Naive thymus-derived CD8-positive, alpha-beta T cell (primary cell): ENCODE measurements at regions of chr1 and their contacts with region 1.

Region 1: GRCh38 chr1:24987875-24988557 is 57.9 kb upstream of the RUNX3 start:
- DNase-seq: peak in 3 of 10 donors; percentile 42 to 64 (median 46)
- ATAC-seq: peak; percentile 50 to 80
- H3K4me3 Mint-ChIP-seq: peak overlapping the region in 9 of 10 donors; percentile 16 to 84 (median 75)
- H3K27ac Mint-ChIP-seq: peak overlapping the region; percentile 83 to 96 (median 90)
- H3K4me1 Mint-ChIP-seq: peaks cover 74 to 100% (median 98%) of the 10 kb centered on the region in 4 donors
- H3K27me3 Mint-ChIP-seq: no peaks in the 10 kb centered on the region

Region 2: DNA sequence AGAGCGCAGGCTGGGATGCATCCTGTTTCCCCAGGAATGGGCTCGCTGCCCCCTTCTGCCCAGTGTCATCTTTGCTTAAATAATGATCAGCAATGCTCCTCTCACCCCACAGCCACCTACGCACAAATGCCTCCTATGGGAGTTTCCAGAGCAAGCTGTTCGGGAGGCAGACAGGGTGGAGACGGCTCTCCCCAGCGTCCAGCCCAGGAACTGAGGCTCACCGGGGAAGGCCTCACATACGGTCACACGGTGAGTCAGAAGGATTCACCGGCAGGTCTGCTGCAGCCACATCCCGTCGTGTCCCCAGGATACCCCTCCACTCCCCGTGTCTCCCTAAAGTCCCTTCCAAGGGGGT is 17.6 kb before region 1 on chr1:
- POLR2A ChIA-PET with region 1: interaction called, 135 read pairs
- DNase-seq: no peak
- ATAC-seq: no peak
- H3K4me3 Mint-ChIP-seq: peak overlapping the region; percentile 44 to 88 (median 72)
- H3K27ac Mint-ChIP-seq: peak overlapping the region; percentile 81 to 97 (median 89)
- H3K4me1 Mint-ChIP-seq: peaks cover 38 to 79% (median 69%) of the 10 kb centered on the region in 4 donors
- H3K27me3 Mint-ChIP-seq: no peaks in the 10 kb centered on the region

Region 3: GRCh38 chr1:25031966-25032667 is 44.1 kb after region 1 on chr1:
- POLR2A ChIA-PET with region 1: interaction called, 14 read pairs
- DNase-seq: peak in 9 of 10 donors; percentile 54 to 86 (median 68)
- ATAC-seq: peak; percentile 58 to 88
- H3K4me3 Mint-ChIP-seq: peak overlapping the region; percentile 54 to 81 (median 69)
- H3K27ac Mint-ChIP-seq: peak overlapping the region in 8 of 10 donors; percentile 95 to 98 (median 96)
- H3K4me1 Mint-ChIP-seq: peaks cover 6 to 73% (median 42%) of the 10 kb centered on the region in 4 donors
- H3K27me3 Mint-ChIP-seq: no peaks in the 10 kb centered on the region

Region 4: DNA sequence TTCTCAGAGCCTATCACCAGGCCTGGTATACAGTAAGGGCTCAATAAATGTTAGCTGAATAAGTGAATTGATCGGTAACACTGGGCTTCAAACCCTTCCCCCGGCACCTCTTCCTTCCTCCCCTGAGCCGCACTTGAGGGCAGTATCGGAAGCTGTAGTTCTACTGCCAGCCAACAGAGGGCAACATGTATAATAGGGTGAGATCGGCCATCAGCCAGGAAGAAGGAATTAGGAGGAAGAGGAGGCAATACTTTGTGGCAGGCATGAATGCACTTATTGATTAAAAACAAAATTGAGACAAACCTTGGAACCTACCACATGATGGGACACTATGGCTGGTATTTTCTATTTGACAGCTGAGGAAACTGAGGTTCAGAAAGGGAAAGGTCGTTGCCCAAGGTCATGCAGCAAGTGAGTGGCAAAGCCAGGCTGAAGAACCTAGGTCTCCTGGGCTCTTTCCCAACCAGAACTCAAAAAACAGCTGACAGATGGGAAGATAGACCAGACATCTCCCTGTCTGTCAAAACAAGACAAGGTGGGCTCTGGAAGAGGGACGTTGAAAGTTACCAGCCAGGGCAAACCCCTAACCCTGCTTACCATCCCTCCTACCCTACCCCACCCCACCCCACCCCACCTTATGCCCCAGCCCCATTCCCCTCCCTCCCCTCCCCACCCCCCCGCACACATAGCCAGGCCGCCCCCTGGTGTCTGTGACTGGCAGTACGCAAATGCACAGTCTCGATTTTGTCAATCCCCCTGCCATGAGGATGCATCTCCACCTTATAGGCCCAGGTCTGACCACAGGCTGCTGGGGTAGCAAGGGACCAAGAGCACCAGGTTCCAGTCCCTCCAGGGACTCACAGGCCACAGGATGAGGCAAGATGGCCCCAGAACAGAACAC is 49.4 kb after region 1 on chr1:
- POLR2A ChIA-PET with region 1: interaction called, 14 read pairs
- DNase-seq: peak; percentile 37 to 81 (median 56)
- ATAC-seq: peak; percentile 45 to 54
- H3K4me3 Mint-ChIP-seq: peak overlapping the region in 7 of 10 donors; percentile 1 to 29 (median 14)
- H3K27ac Mint-ChIP-seq: peak overlapping the region in 8 of 10 donors; percentile 12 to 90 (median 50)
- H3K4me1 Mint-ChIP-seq: peaks cover 32 to 42% (median 36%) of the 10 kb centered on the region in 4 donors
- H3K27me3 Mint-ChIP-seq: no peaks in the 10 kb centered on the region

Region 5: GRCh38 chr1:25048728-25049127 is 60.7 kb after region 1 on chr1:
- POLR2A ChIA-PET with region 1: no interaction called
- DNase-seq: no peak
- ATAC-seq: no peak
- H3K4me3 Mint-ChIP-seq: no peak overlapping the region
- H3K27ac Mint-ChIP-seq: peak overlapping the region in 2 of 10 donors; percentile 6 to 55
- H3K4me1 Mint-ChIP-seq: peaks cover 2 to 12% (median 7%) of the 10 kb centered on the region in 4 donors
- H3K27me3 Mint-ChIP-seq: peaks cover 0 to 9% (median 0%) of the 10 kb centered on the region in 5 donors

Region 6: GRCh38 chr1:25068829-25069228 is 80.8 kb after region 1 on chr1:
- POLR2A ChIA-PET with region 1: no interaction called
- DNase-seq: no peak
- ATAC-seq: no peak
- H3K4me3 Mint-ChIP-seq: no peak overlapping the region
- H3K27ac Mint-ChIP-seq: no peak overlapping the region
- H3K4me1 Mint-ChIP-seq: peaks cover 14 to 31% (median 18%) of the 10 kb centered on the region in 4 donors
- H3K27me3 Mint-ChIP-seq: no peaks in the 10 kb centered on the region

Region 7: GRCh38 chr1:25080294-25081209 is 92.5 kb after region 1 on chr1:
- POLR2A ChIA-PET with region 1: no interaction called
- DNase-seq: no peak
- ATAC-seq: no peak
- H3K4me3 Mint-ChIP-seq: no peak overlapping the region
- H3K27ac Mint-ChIP-seq: peak overlapping the region in 3 of 10 donors; percentile 3 to 59 (median 19)
- H3K4me1 Mint-ChIP-seq: peaks cover 3 to 6% (median 4%) of the 10 kb centered on the region in 4 donors
- H3K27me3 Mint-ChIP-seq: no peaks in the 10 kb centered on the region